Activated CD4-positive, alpha-beta T cell treated with anti-CD3 and anti-CD28 coated beads, Interleukin-2, amount 10 ng/mL, durations not matched to agents 24 days and 14 days (primary cell): ENCODE measurements at regions of chr19 and their contacts with region 1.

Region 1: GRCh38 chr19:48152551-48152950 is 17.6 kb downstream of the LIG1 start:
- DNase-seq: peak; percentile 90
- H3K4me3 Mint-ChIP-seq: no peak overlapping the region
- H3K27ac Mint-ChIP-seq: peak overlapping the region; percentile 29
- H3K4me1 Mint-ChIP-seq: peaks cover 3% of the 10 kb centered on the region
- H3K27me3 Mint-ChIP-seq: no peaks in the 10 kb centered on the region

Region 2: GRCh38 chr19:48110350-48110966 is 42.1 kb before region 1 on chr19 and contains the start of gene PLA2G4C:
- intact Hi-C with region 1: loop called (anchors 1 kb)
- DNase-seq: peak; percentile 94
- H3K4me3 Mint-ChIP-seq: peak within 1 kb of the TSS; percentile 89
- H3K27ac Mint-ChIP-seq: peak within 1 kb of the TSS; percentile 94
- H3K4me1 Mint-ChIP-seq: peaks cover 16% of the 10 kb centered on the region
- H3K27me3 Mint-ChIP-seq: no peaks in the 10 kb centered on the region
- total RNA-seq, gene PLA2G4C: 9.2 and 11.4 TPM in 2 replicates